ENCODE measurements at regions of chr19 and their contacts with region 1.

Region 1: DNA sequence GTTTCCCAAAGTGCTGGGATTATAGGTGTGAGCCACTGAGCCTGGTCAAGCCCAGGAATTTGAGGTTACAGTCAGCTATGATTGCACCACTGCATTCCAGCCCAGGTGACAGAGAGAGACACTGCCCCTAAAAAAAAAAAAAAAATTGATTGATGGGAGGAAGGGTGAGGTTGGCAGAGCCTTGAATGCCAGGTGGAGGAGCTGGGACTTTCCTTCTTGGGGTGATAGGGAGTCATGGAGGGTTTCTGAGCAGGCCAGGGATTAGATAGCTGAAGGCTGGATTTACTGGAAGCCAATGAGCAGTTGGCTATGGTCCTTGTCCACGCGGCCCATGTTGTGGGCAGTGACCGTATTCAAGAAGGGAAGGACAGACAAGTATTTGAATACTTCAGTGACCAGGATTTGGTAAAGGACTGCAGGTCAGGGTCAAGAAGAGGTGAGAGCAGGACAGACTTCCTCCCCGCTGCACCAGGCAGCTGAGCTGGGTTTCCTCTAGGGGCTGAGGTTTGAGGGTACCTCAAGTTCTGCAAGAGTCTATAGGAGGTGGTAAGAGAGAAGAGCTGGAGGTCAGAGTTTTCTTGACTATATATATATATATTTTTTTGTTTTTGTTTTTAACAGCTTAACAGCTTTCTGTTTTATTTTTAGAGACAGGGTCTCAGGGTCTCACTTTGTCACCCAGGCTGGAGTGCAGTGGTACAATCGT is 6.9 kb upstream of the ICAM4 start:
- DNase-seq: no peak
- ATAC-seq: no peak
- H3K4me3 ChIP-seq: no peak overlapping the region
- H3K27ac ChIP-seq: no peak overlapping the region
- H3K4me1 ChIP-seq: peaks cover 8% of the 10 kb centered on the region; the same call in 1 of the 3 replicates
- CTCF ChIP-seq: no peak
- EP300 ChIP-seq: no peak
- POLR2A ChIP-seq: no peak
- RAD21 ChIP-seq: no peak

Region 2: GRCh38 chr19:10259162-10259905 is 20.6 kb before region 1 on chr19:
- CTCF ChIA-PET with region 1: interaction called, 16 read pairs
- POLR2A ChIA-PET with region 1: no interaction called
- DNase-seq: peak in 1 of 2 experiments; percentile 86
- ATAC-seq: peak; percentile 67 to 82; a peak in 5 of 6 replicates
- H3K4me3 ChIP-seq: no peak overlapping the region
- H3K27ac ChIP-seq: 0 out of 6 replicates have a peak overlapping the region, but pooled peaks of 1 of the 2 experiments have one; percentile 21
- H3K4me1 ChIP-seq: peaks cover 15% of the 10 kb centered on the region; the same call in 2 of the 3 replicates
- CTCF ChIP-seq: peak; percentile 57
- EP300 ChIP-seq: no peak
- POLR2A ChIP-seq: no peak
- RAD21 ChIP-seq: peak; percentile 57 to 64

Region 3: DNA sequence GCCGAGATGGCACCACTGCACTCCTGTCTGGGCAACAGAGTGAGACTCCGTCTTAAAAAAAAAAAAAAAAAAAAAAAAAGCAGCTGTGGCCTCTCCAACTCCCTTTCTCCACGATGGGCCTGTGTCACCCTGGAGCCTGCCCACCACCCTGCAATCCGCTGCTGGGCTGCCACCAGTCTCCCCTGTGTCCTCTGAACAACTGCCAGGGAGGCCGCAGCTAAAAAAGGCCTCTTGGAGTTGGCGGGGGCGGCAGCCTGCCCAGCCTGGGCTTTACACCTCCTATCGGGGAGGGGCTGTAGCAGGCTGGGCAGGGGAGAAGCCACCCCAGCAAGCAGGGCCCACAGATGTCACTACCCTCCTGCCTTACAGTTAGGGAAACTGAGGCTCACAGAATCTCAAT is 120.0 kb after region 1 on chr19:
- CTCF ChIA-PET with region 1: no interaction called
- POLR2A ChIA-PET with region 1: no interaction called
- DNase-seq: no peak
- ATAC-seq: no peak
- H3K4me3 ChIP-seq: no peak overlapping the region
- H3K27ac ChIP-seq: no peak overlapping the region
- H3K4me1 ChIP-seq: peaks cover 20% of the 10 kb centered on the region
- CTCF ChIP-seq: no peak
- EP300 ChIP-seq: no peak
- POLR2A ChIP-seq: no peak
- RAD21 ChIP-seq: no peak

Region 4: GRCh38 chr19:10543420-10544241 is 263.7 kb after region 1 on chr19 and contains the start of gene ATG4D:
- CTCF ChIA-PET with region 1: no interaction called
- POLR2A ChIA-PET with region 1: no interaction called
- DNase-seq: peak; percentile 60 to 88
- ATAC-seq: peak; percentile 89 to 90
- H3K4me3 ChIP-seq: peak within 1 kb of the TSS; percentile 94
- H3K27ac ChIP-seq: peak within 1 kb of the TSS; percentile 91 to 99
- H3K4me1 ChIP-seq: peaks cover 6% of the 10 kb centered on the region; the same call in 2 of the 3 replicates
- CTCF ChIP-seq: no peak
- EP300 ChIP-seq: no peak
- POLR2A ChIP-seq: peak; percentile 79
- RAD21 ChIP-seq: no peak
- polyA plus RNA-seq, gene ATG4D: 6.9 and 7.3 TPM in 2 replicates